ENCODE measurements at regions of chr2 and their contacts with region 1.

Region 1: GRCh38 chr2:28661589-28662001 is 90.0 kb upstream of the PPP1CB start:
- DNase-seq: peak; percentile 63 to 93
- H3K4me3 ChIP-seq: no peak overlapping the region
- H3K27ac ChIP-seq: peak overlapping the region; percentile 91 to 94
- H3K4me1 ChIP-seq: peaks cover 13 to 59% of the 10 kb centered on the region in 2 donors
- H3K27me3 ChIP-seq: no peaks in the 10 kb centered on the region
- CTCF ChIP-seq: no peak

Region 2: DNA sequence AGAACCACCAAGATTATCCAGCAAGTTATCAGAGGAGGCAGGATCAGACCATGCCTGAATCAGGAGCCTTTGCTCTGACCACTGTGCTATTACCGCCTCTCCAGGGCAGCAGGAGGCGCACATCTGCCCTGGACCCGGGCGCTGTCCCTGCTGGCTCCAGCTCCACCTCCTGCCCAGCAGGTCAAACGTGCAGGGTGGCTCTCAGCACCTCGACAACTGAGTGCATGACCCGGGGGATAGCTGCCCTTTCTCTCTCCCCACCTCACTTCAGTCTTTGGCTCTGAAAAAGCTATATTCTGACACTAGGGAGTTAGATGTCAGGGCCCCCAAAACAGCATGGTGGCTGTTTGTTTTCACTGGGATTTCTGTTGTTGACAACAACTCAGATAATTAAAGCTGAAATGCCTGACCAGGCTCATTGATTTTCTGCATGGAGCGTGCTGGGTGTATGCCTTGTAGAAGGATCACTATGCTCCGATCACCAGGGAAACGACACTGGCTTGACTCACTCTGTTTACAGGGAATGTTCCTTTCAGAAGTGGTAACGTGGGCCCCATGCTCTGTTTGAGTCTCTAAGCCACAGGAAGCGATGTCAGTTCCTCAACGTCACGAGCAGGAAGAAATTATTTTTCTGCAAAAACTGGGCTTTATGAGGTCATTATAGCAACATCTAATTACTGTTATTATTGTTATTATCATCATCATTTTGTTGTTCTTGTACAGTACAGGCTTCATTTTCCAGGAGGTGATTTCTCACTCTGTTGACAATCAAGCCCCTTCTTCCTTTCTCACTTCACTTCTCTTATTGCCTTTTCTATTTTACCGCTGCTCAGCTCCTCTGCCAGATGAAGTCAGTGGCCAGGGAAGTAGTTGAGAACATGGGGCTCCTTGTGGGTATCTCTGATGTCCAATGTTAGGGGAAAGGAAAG is 40.2 kb before region 1 on chr2:
- intact Hi-C with region 1: loop called (anchors 1 kb)
- DNase-seq: peak; percentile 86 to 97
- H3K4me3 ChIP-seq: peak overlapping the region in 1 of 2 donors; percentile 8
- H3K27ac ChIP-seq: peak overlapping the region; percentile 94 to 100
- H3K4me1 ChIP-seq: peaks cover 34 to 65% of the 10 kb centered on the region in 2 donors
- H3K27me3 ChIP-seq: no peaks in the 10 kb centered on the region
- CTCF ChIP-seq: no peak

Region 3: DNA sequence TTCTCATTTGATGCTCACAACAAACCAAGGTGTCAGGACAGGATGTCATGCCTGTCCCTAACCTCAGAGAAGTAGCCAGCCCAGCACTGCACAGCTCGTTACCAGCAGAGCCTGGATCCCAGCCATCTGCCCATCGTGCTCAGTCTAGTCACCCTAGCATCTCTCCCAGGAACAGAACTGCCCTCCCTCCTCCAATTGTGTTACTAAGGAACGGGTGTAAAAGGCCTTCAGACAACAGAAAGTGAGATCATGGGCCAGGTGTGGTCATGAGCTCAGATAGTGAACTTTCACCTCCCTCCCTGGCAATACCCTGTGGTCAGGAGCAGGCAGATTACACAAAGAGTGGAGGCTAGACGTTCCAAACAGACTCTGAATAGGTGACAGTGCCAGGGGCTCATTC is 21.8 kb before region 1 on chr2:
- intact Hi-C with region 1: loop called (anchors 1 kb)
- DNase-seq: no peak
- H3K4me3 ChIP-seq: no peak overlapping the region
- H3K27ac ChIP-seq: peak overlapping the region; percentile 94 to 98
- H3K4me1 ChIP-seq: peaks cover 30 to 49% of the 10 kb centered on the region in 2 donors
- H3K27me3 ChIP-seq: no peaks in the 10 kb centered on the region
- CTCF ChIP-seq: no peak

Region 4: DNA sequence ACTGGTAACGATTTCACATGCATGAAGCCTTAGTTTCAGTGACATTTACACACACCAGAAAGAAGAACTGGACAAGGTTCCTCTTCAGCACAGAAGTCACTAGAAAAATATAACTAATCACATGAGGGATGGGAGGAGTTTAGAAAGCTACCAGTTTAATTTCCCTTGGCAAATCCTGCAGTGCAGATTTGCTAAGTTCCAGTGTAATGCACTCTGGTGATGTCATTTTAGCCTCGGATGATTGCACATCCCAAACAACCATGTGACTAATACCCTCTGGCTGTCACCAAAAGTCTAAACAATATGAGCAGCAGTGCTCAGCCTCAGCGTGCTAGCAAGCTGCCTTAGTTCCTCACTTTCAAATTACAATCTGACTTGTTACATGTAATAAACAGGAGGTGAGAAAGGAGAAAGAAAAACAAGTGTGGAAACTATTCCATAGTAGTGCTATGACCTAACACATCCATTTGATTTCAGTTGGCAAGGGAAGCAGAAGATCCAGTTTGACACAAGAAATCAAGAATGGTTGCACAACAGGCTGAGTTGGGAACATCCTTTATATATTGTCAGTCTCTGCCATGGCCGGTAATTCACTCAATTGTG is 54.8 kb after region 1 on chr2:
- intact Hi-C with region 1: loop called (anchors 2 kb)
- DNase-seq: peak; percentile 24 to 89
- H3K4me3 ChIP-seq: no peak overlapping the region
- H3K27ac ChIP-seq: peak overlapping the region; percentile 80 to 84
- H3K4me1 ChIP-seq: peaks cover 5 to 13% of the 10 kb centered on the region in 2 donors
- H3K27me3 ChIP-seq: no peaks in the 10 kb centered on the region
- CTCF ChIP-seq: no peak

Region 5: DNA sequence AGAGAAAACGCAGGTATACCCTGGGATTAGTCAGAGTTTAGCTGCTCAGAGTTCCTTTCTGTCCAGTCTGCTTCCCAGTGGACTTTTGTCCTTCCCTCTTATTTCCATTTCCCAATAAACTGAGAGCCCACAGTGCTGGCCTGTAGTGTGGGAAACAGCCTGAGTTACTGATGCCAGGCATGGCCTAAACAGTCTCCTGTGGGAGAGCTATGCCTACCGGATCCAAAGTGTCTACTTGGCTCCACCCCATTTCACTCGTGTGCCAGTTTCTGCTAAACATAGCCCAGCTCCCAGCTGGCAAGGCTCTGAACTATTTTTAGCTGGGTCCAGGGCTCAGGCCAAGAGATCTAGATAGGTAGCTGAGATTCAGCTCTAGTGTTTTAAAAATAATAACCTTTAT is 74.4 kb after region 1 on chr2:
- intact Hi-C with region 1: loop called (anchors 2 kb)
- DNase-seq: peak; percentile 72 to 95
- H3K4me3 ChIP-seq: peak overlapping the region; percentile 52 to 62
- H3K27ac ChIP-seq: peak overlapping the region; percentile 86 to 89
- H3K4me1 ChIP-seq: peaks cover 4 to 20% of the 10 kb centered on the region in 2 donors
- H3K27me3 ChIP-seq: no peaks in the 10 kb centered on the region
- CTCF ChIP-seq: no peak

Region 6: GRCh38 chr2:29480426-29480825 is 818.8 kb after region 1 on chr2:
- intact Hi-C with region 1: no loop called
- DNase-seq: no peak
- H3K4me3 ChIP-seq: no peak overlapping the region
- H3K27ac ChIP-seq: no peak overlapping the region
- H3K4me1 ChIP-seq: no peaks in the 10 kb centered on the region
- H3K27me3 ChIP-seq: no peaks in the 10 kb centered on the region
- CTCF ChIP-seq: no peak

Measured in ascending aorta (tissue), 2 donors.